Dorsolateral prefrontal cortex (tissue), 120 donors: ENCODE measurements at regions of chr11 and their contacts with region 1.

Region 1: DNA sequence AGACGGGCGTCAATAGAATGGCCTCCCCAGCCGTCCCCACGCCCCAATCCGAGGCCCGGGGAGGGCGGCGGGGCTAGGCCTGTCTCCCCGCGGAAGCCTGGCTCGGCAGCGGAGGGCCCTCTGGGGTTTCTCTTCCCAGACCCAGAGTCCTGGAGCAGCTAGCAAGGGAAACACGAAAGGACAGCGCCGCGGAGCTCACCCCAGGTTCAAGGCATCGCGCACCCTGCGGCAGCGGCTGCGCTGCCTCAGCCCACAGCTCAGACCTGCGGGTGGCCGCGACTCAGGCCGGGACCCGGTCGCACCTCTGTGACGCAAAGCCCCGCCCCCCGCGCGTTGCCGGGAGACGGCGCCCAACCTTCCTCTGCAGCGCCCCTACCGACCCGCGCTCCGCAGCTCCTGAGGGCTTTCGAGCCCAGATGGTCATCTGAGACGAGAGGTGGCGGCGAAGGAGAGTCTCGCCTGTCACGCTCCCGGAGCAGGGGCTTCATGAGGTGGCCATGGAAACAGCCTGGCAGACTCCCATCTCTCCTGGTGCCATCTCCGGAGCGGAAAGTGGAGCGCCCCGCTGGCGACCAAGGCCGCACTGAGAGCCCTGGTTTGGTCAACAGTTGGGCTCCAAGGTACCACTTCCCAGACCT is at the start of gene RNF141:
- DNase-seq: peak; percentile 90 to 97 (median 94)
- H3K4me3 ChIP-seq: peak within 1 kb of the TSS; percentile 63 to 99 (median 91)
- H3K27ac ChIP-seq: peak within 1 kb of the TSS; percentile 51 to 96 (median 91)
- H3K27me3 ChIP-seq: no peaks in the 10 kb centered on the region
- CTCF ChIP-seq: peak; percentile 64 to 95 (median 89)
- total RNA-seq, gene RNF141: 47.2 to 142 (median 77.9) TPM

Region 2: GRCh38 chr11:10641177-10641911 is 100.3 kb after region 1 on chr11:
- intact Hi-C with region 1: loop called (anchors 5 to 10 kb)
- DNase-seq: no peak
- H3K4me3 ChIP-seq: no peak overlapping the region
- H3K27ac ChIP-seq: peak overlapping the region in 53 of 59 donors; percentile 19 to 94 (median 84)
- H3K27me3 ChIP-seq: no peaks in the 10 kb centered on the region
- CTCF ChIP-seq: no peak